ENCODE measurements at regions of chr11 and their contacts with region 1.

Region 1: GRCh38 chr11:18775492-18776292 is 15.9 kb downstream of the PTPN5 start:
- DNase-seq: peak; percentile 78 to 86 (median 81)
- ATAC-seq: peak; percentile 79
- H3K4me3 ChIP-seq: no peak overlapping the region
- H3K27ac ChIP-seq: no peak overlapping the region
- H3K4me1 ChIP-seq: no peaks in the 10 kb centered on the region
- H3K27me3 ChIP-seq: no peaks in the 10 kb centered on the region
- CTCF ChIP-seq: peak; percentile 51 to 78 (median 74)
- POLR2A ChIP-seq: no peak

Region 2: DNA sequence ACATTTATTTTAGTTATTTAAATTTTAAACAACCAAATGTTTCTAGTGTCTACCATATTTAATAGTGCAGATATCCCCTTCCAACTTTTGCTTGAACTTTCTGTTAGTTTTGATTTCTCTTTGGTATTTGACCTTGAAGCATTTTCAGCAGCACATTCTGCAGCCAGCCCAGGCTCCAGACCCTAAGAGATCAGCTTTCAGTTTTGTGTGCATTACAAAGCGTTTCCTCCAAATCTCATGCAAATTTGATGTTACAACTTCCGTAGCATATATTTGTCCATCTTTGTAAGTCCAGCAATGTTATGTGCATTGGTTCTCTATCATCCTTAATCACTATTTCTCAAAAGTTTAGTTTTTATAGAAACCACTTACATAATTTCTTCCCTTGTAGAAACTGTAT is 748.2 kb before region 1 on chr11:
- intact Hi-C with region 1: no loop called
- DNase-seq: no peak
- ATAC-seq: no peak
- H3K4me3 ChIP-seq: no peak overlapping the region
- H3K27ac ChIP-seq: no peak overlapping the region
- H3K4me1 ChIP-seq: no peaks in the 10 kb centered on the region
- H3K27me3 ChIP-seq: no peaks in the 10 kb centered on the region
- CTCF ChIP-seq: no peak
- POLR2A ChIP-seq: no peak

Region 3: DNA sequence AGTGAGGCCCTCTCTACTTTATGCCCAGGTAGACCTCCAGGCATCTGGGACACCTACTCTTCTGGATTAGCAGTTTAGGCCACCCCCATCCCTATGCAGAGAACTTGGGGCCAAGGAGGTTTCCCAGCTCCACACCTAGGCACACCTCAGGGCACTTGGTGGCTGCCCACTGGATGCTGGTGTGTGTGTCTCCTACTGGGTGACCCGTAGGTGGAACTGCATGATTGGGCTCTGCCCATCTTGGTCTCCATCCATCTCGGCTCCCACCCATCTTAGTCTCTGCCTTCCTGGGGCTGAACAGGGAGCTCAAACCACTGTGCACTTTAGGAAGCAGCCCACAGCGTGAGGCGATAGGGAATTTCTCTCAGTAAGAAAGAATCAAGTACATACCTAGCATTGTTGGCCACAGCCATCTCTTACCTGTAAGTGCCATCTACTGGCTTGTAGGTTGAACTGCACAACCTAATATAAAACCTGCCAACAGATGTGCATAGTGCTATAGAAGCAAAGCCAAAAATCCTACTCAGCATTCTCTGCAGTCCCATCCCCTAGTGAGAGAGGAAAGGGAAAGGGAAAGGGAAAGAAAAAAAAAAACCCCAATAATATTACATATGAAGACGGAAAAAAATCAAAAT is 77.5 kb after region 1 on chr11:
- intact Hi-C with region 1: loop called (anchors 10 kb)
- DNase-seq: peak in 3 of 4 donors; percentile 22 to 47 (median 44)
- ATAC-seq: peak; percentile 77
- H3K4me3 ChIP-seq: no peak overlapping the region
- H3K27ac ChIP-seq: no peak overlapping the region
- H3K4me1 ChIP-seq: no peaks in the 10 kb centered on the region
- H3K27me3 ChIP-seq: no peaks in the 10 kb centered on the region
- CTCF ChIP-seq: peak; percentile 31 to 80 (median 69)
- POLR2A ChIP-seq: no peak